Activated T-helper 1 cell treated with anti-CD3 and anti-CD28 coated beads, Interleukin-12 subunit alpha, Interleukin-12 subunit beta, Interleukin-2, Interleukin-4 antibody, amounts not matched to agents 30 ng/mL and 10 ng/mL and 1 ng/mL, durations not matched to agents 14 hours and 24 hours and 36 hours (primary cell): ENCODE measurements at regions of chr10 and their contacts with region 1.

Region 1: DNA sequence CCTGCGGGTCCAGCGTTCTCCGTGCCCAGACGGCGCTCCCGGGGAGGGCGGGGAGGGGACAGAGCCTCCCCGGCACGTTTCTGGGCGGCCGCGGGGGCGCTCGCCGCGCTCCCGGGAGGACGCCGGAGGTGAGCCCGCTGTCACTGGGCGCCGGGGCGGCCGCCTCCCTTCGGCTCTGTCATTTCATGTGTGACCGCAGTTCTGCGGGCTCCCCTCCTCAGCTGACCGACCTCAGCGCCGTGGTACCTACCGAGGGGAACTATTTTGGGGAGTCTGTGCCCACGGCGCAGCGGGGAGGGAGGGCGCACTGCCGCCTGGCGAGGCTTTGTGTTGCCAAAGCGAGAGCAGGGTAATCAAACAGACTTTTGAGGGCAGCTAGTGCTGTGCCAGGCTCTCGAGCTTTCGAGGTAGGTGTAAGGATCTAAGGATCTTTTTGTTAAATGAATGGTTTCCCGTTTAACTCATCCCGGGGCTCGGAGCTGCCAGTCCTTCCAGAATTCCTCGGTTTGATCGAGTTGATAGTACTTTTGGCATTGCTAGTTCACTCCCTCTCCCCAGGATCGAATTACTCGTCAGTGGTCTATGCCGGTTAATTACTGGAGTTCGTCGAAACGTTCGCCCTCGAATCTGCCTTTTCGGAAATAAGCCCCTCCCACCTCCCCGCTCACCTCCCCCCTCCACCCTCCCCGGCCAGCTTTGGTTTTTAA is 1.9 kb downstream of the ARID5B start:
- DNase-seq: peak; percentile 69
- H3K4me3 Mint-ChIP-seq: peak overlapping the region; percentile 97
- H3K27ac Mint-ChIP-seq: peak overlapping the region; percentile 95
- H3K4me1 Mint-ChIP-seq: peaks cover 60% of the 10 kb centered on the region
- H3K27me3 Mint-ChIP-seq: no peaks in the 10 kb centered on the region

Region 2: DNA sequence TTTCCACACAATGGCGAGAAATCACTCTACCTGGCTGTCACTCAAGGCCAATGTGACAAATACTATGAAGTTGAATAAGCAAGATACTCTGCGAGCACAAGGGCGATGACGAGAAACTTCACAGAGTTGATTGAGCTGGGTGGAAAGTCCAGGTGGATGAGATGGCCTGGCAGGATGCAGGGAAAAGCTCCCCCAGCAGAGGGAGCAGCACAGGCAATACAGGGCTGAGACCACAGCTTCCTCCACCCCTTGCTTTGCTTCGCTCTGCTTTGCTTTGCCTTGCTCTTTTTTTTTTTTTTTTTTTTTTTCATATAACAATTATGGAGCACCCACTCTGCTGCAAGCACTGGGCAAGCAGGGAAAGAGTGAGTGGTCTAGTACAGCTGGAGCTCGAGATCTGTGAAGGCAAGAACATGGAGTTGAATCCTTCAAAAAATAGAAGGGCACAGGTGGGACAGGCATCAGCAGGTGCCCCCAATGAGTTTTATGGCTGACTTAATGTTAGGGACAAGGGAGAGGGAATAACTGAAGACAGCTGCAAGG is 152.4 kb before region 1 on chr10:
- intact Hi-C with region 1: loop called (anchors 5 kb)
- DNase-seq: peak; percentile 53
- H3K4me3 Mint-ChIP-seq: no peak overlapping the region
- H3K27ac Mint-ChIP-seq: peak overlapping the region; percentile 35
- H3K4me1 Mint-ChIP-seq: peaks cover 23% of the 10 kb centered on the region
- H3K27me3 Mint-ChIP-seq: no peaks in the 10 kb centered on the region

Region 3: GRCh38 chr10:61937631-61938351 is 34.4 kb after region 1 on chr10:
- intact Hi-C with region 1: loop called (anchors 1 kb)
- DNase-seq: no peak
- H3K4me3 Mint-ChIP-seq: peak overlapping the region; percentile 5
- H3K27ac Mint-ChIP-seq: peak overlapping the region; percentile 78
- H3K4me1 Mint-ChIP-seq: peaks cover 75% of the 10 kb centered on the region
- H3K27me3 Mint-ChIP-seq: no peaks in the 10 kb centered on the region

Region 4: GRCh38 chr10:61987951-61988379 is 84.6 kb after region 1 on chr10:
- intact Hi-C with region 1: loop called (anchors 1 kb)
- DNase-seq: peak; percentile 33
- H3K4me3 Mint-ChIP-seq: peak overlapping the region; percentile 78
- H3K27ac Mint-ChIP-seq: peak overlapping the region; percentile 99
- H3K4me1 Mint-ChIP-seq: peaks cover 87% of the 10 kb centered on the region
- H3K27me3 Mint-ChIP-seq: no peaks in the 10 kb centered on the region

Region 5: GRCh38 chr10:62244780-62245467 is 341.6 kb after region 1 on chr10:
- intact Hi-C with region 1: loop called (anchors 1 kb)
- DNase-seq: peak; percentile 47
- H3K4me3 Mint-ChIP-seq: peak overlapping the region; percentile 60
- H3K27ac Mint-ChIP-seq: peak overlapping the region; percentile 45
- H3K4me1 Mint-ChIP-seq: peaks cover 45% of the 10 kb centered on the region
- H3K27me3 Mint-ChIP-seq: no peaks in the 10 kb centered on the region

Region 6: DNA sequence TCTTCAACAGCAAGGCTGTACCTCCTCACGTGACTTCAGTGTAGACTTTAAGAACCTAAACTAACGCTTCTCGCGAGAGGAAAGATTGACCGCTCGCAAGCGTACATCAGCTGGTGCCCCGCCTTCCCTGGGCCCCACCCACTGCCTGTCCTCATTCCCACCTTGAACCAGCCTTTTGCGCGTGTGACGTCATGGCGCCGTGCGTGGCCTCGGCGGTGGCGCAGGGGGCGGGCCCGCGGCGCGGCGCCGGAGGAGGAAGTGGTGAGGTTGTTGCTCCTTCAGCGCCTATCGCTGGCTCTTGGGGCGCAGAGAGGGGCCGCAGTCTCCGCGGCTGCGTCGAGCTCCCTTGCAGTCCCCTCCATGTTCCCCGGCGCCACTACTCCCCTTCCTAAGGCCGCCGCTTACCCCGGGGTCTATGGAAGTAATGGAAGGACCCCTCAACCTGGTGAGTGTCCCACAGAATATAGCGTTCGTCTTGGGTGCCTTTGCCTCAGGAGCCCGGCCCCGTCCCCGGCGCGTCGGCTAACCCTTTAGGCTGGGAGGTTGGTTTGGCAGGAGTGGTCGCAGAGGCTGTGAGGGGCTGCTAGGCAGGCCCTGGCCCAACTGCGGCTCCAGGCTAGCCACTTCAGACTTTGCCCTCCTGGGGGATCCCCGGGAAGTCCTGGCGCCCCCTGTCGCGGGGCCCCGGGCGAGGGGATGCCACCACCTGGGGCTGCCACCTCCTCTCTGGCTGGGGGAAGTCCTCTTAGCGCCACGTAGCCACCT is 1229.9 kb after region 1 on chr10 and contains the start of gene NRBF2:
- intact Hi-C with region 1: loop called (anchors 10 kb)
- DNase-seq: peak; percentile 97
- H3K4me3 Mint-ChIP-seq: peak within 1 kb of the TSS; percentile 91
- H3K27ac Mint-ChIP-seq: peak within 1 kb of the TSS; percentile 83
- H3K4me1 Mint-ChIP-seq: peaks cover 32% of the 10 kb centered on the region
- H3K27me3 Mint-ChIP-seq: peaks cover 3% of the 10 kb centered on the region
- total RNA-seq, gene NRBF2: 30.0 and 30.8 TPM in 2 replicates